ENCODE measurements at regions of chr7 and their contacts with region 1.

Region 1: GRCh38 chr7:75866489-75867389 is 12.1 kb upstream of the RHBDD2 start:
- DNase-seq: peak; percentile 75
- ATAC-seq: peak; percentile 96
- H3K4me3 ChIP-seq: no peak overlapping the region
- H3K27ac ChIP-seq: no peak overlapping the region
- H3K4me1 ChIP-seq: peaks cover 11% of the 10 kb centered on the region
- H3K27me3 ChIP-seq: no peaks in the 10 kb centered on the region
- CTCF ChIP-seq: peak; percentile 93

Region 2: GRCh38 chr7:76020031-76020714 is 153.4 kb after region 1 on chr7:
- intact Hi-C with region 1: loop called (anchors 5 kb)
- DNase-seq: peak; percentile 82
- ATAC-seq: peak; percentile 90
- H3K4me3 ChIP-seq: no peak overlapping the region
- H3K27ac ChIP-seq: no peak overlapping the region
- H3K4me1 ChIP-seq: peaks cover 14% of the 10 kb centered on the region
- H3K27me3 ChIP-seq: no peaks in the 10 kb centered on the region
- CTCF ChIP-seq: peak; percentile 95

Measured in upper lobe of right lung (tissue), 1 donor.